ENCODE measurements at regions of chr15 and their contacts with region 1.

Region 1: DNA sequence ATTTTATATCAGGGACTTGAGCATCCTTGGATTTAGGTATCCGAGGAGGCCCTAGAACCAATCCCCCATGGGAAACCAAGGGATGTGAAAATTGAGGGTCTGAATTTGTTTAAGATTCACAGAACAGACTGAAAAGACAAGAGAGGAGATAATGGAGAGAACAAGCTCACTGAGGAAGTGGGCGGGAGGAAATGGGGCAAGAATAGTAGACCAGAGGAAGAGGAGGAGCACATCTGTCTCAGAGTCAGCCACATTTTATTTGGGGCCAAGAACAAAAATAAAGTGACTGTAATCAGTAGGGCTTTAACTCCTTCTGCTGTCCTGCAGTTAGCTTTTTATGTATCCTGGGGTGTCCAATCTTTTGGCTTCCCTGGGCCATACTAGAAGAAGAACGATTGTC is 63.8 kb downstream of the BLM start:
- DNase-seq: peak; percentile 12
- H3K4me3 Mint-ChIP-seq: no peak overlapping the region
- H3K27ac Mint-ChIP-seq: peak overlapping the region; percentile 14
- H3K4me1 Mint-ChIP-seq: peaks cover 10% of the 10 kb centered on the region
- H3K27me3 Mint-ChIP-seq: no peaks in the 10 kb centered on the region

Region 2: DNA sequence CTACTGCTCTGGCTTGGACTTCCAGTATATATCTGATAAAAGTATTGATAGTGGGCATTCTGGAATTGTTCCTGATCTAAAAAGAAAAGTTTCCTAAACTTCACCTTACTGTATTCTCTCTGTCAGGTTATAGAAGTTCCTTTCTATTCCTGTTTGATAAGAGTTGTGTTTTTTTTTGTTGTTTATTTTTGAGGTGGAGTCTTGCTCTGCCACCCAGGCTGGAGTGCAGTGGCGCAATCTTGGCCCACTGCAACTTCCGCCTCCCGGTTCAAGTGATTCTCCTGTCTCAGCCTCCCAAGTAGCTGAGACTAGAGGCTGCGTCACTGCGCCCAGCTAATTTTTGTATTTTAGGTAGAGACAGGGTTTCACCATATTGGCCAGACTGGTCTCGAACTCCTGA is 50.6 kb before region 1 on chr15:
- CTCF ChIA-PET with region 1: no interaction called
- intact Hi-C with region 1: loop called (anchors 5 kb)
- DNase-seq: no peak
- H3K4me3 Mint-ChIP-seq: no peak overlapping the region
- H3K27ac Mint-ChIP-seq: no peak overlapping the region
- H3K4me1 Mint-ChIP-seq: peaks cover under 1% of the 10 kb centered on the region
- H3K27me3 Mint-ChIP-seq: no peaks in the 10 kb centered on the region

Region 3: GRCh38 chr15:90794538-90794937 is 13.6 kb after region 1 on chr15:
- CTCF ChIA-PET with region 1: no interaction called
- intact Hi-C with region 1: no loop called
- DNase-seq: no peak
- H3K4me3 Mint-ChIP-seq: no peak overlapping the region
- H3K27ac Mint-ChIP-seq: no peak overlapping the region
- H3K4me1 Mint-ChIP-seq: no peaks in the 10 kb centered on the region
- H3K27me3 Mint-ChIP-seq: no peaks in the 10 kb centered on the region

Region 4: DNA sequence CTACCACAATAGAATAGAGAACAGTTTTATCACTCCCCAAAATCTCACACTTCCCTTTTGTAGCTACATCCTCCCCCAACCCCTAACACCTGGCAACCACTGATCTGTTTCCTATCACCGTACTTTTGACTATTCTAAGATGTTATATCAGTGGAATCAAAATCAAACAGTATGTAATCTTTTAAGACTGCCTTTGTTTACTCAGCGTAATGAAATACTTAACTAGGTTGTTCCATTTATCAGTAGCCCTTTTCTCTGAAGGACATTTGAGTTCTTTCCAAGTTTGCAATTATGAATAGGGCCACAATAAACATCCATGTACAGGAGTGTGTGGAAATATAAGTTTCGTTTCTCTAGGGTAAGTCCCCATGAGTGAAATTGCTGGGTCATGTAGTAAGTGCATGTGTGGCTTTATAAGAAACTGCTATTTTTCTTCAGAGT is 691.4 kb after region 1 on chr15:
- CTCF ChIA-PET with region 1: no interaction called
- intact Hi-C with region 1: no loop called
- DNase-seq: peak; percentile 48
- H3K4me3 Mint-ChIP-seq: no peak overlapping the region
- H3K27ac Mint-ChIP-seq: peak overlapping the region; percentile 4
- H3K4me1 Mint-ChIP-seq: peaks cover 50% of the 10 kb centered on the region
- H3K27me3 Mint-ChIP-seq: no peaks in the 10 kb centered on the region

Measured in activated naive CD4-positive, alpha-beta T cell treated with anti-CD3 and anti-CD28 coated beads for 36 hours (primary cell).